ENCODE measurements at regions of chr4 and their contacts with region 1.

Region 1: GRCh38 chr4:123555233-123555806 is 158.7 kb downstream of the SPRY1 start:
- DNase-seq: peak; percentile 88 to 94 (median 91)
- ATAC-seq: peak; percentile 97 to 98
- H3K4me3 ChIP-seq: no peak overlapping the region
- H3K27ac ChIP-seq: peak overlapping the region; percentile 6
- H3K4me1 ChIP-seq: peaks cover 6% of the 10 kb centered on the region
- H3K27me3 ChIP-seq: no peaks in the 10 kb centered on the region

Region 2: DNA sequence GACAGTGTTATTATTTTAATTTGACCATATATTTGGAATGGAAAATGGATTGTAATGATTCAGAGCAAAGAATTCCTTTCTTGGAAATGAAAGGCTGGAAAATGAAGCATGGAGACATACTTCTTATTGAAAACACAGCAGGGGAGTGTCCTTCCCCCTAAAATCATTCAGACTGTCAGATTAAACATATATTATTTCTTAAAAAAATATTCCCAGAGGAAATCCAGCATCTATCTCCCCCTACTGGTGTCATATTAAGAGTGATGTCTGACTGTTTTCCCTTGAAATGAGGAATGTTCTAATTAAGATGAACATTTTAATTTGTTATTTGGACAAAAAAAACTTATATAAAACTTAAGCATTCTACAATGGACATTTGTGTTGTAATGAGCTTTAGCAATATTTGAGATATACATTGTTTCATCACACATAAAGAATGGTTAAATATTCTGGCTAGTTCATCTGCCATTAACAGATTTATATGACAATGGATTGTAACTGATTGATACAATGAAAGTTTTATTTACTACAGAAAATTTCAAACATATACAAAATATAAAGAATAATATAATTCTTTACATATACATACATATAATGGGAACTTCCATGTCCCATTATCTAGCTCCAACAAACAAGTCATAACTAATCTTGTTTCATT is 105.9 kb after region 1 on chr4:
- intact Hi-C with region 1: loop called in 1 of 4 experiments (anchors 10 kb)
- DNase-seq: no peak
- ATAC-seq: no peak
- H3K4me3 ChIP-seq: no peak overlapping the region
- H3K27ac ChIP-seq: no peak overlapping the region
- H3K4me1 ChIP-seq: no peaks in the 10 kb centered on the region
- H3K27me3 ChIP-seq: no peaks in the 10 kb centered on the region

Region 3: DNA sequence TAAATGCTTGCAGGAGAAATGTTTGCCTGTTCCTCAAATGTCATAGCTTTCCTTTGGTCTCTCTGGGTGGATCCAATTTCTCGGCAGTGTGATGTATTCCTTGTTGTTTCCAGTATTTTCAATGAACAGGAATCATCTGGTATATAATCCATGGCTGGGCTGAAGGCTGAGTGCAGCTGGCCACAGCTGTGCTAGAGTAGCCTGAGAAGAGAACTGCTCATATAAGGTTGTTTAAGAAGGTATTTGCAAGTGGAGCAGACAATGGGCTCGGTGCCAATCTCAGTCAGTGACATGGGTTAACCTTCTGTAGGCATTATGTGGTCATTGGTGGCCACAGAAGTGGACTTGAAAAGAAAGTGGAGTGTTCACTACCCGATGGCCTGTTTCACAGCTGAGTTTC is 231.6 kb after region 1 on chr4:
- intact Hi-C with region 1: no loop called
- DNase-seq: peak; percentile 41 to 65 (median 60)
- ATAC-seq: peak; percentile 52 to 65
- H3K4me3 ChIP-seq: no peak overlapping the region
- H3K27ac ChIP-seq: peak overlapping the region; percentile 72
- H3K4me1 ChIP-seq: peaks cover 6% of the 10 kb centered on the region
- H3K27me3 ChIP-seq: no peaks in the 10 kb centered on the region